ENCODE measurements at regions of chr6 and their contacts with region 1.

Region 1: DNA sequence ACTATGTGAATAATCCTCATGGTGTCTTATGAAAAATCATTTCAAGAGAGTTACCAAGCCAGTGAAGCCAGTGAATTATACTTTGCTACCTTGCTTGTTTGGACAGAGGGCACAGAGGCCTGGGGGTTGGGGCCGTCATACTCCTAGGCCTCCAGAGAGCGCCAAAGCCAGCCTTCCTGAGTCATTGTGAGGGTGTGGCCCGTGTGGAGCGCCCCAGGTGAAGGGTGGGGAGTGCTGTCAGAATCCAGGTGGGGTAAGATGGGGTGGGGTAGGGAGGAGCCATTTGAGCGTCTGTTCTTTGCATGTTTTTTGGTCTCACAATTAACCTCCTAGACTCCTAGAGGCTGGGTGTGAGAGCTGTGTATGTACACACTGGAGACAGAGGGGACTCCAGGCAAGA is 71.1 kb downstream of the PERP start:
- DNase-seq: peak in 1 of 4 experiments; percentile 8
- ATAC-seq: peak; percentile 75
- H3K4me3 ChIP-seq: no peak overlapping the region
- H3K27ac ChIP-seq: no peak overlapping the region
- H3K4me1 ChIP-seq: no peaks in the 10 kb centered on the region
- H3K27me3 ChIP-seq: peaks cover 9 to 23% of the 10 kb centered on the region in 2 experiments
- CTCF ChIP-seq: no peak
- EP300 ChIP-seq: no peak
- POLR2A ChIP-seq: no peak
- RAD21 ChIP-seq: no peak

Region 2: DNA sequence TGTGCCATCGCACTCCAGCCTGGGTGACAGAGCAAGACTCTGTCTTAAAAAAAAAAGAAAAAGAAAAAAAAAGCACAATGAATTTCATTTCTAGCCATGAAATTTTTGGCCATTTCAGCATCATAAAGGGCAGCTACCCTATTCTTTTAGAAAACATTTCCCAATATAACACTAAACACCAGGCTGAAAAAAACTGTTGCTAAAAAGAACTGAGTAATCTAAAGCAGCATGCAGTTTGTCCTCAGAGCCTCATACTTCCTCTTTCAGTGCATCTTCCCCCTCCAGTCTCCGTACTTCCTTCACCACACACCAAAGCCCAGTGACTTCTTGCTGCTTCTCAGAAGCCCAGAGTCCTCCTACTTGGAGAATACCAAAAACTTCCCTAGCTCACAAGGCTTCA is 811.3 kb before region 1 on chr6:
- CTCF ChIA-PET with region 1: no interaction called
- POLR2A ChIA-PET with region 1: no interaction called
- in situ Hi-C with region 1: no loop called
- intact Hi-C with region 1: no loop called
- DNase-seq: no peak
- ATAC-seq: peak; percentile 61
- H3K4me3 ChIP-seq: no peak overlapping the region
- H3K27ac ChIP-seq: peak overlapping the region; percentile 78; the same call in 1 of the 3 replicates
- H3K4me1 ChIP-seq: peaks cover 7 to 33% of the 10 kb centered on the region in 2 experiments
- H3K27me3 ChIP-seq: no peaks in the 10 kb centered on the region; a peak in 1 of 5 replicates
- CTCF ChIP-seq: no peak
- EP300 ChIP-seq: no peak
- POLR2A ChIP-seq: no peak
- RAD21 ChIP-seq: peak in 1 of 2 experiments; percentile 4; a peak in 2 of 4 replicates

Region 3: DNA sequence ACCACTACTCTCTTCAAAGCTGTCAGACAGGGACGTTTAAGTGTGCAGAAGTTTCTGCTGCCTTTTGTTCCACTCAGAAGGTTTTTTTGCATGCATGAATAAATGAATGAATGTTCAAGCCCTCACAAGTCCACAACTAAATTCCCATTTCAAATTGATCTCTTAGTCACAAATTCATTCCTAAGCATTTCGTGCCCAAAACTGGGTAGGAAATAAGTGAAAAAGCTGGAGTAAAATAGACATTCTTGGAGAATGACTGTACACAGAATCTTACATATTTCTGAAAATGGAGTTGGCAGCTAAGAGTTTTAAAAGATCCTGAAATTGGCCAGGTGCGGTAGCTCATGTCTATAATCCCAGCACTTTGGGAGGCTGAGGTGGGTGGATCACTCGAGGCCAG is 46.4 kb before region 1 on chr6:
- CTCF ChIA-PET with region 1: no interaction called
- POLR2A ChIA-PET with region 1: no interaction called
- in situ Hi-C with region 1: no loop called
- intact Hi-C with region 1: no loop called
- DNase-seq: no peak
- ATAC-seq: no peak
- H3K4me3 ChIP-seq: no peak overlapping the region
- H3K27ac ChIP-seq: no peak overlapping the region
- H3K4me1 ChIP-seq: no peaks in the 10 kb centered on the region
- H3K27me3 ChIP-seq: peaks cover 2 to 4% of the 10 kb centered on the region in 2 experiments; a peak in 2 of 5 replicates
- CTCF ChIP-seq: no peak
- EP300 ChIP-seq: no peak
- POLR2A ChIP-seq: no peak
- RAD21 ChIP-seq: no peak

Region 4: DNA sequence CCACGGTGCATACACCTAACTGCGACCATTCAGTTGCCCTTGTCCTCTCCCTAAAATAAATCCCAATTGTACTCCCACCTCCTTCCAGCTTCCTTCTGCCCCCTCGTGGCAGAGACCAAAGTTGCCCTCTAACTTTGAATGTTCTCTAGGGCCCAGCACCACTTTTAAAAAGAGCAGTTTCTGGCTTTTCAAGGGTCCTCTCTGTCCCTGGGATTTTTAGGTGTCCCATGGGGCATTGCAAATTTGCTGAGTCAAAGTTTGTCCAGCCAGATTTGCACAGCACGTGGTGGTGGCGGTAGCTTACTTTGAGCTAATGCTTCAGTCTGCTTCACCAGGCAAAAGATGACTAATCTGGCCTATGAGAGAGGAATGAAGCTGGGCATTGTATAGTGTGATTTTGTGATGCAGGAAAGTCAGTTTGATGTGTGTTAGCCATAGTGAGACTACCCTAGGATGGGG is 29.1 kb before region 1 on chr6:
- CTCF ChIA-PET with region 1: no interaction called
- POLR2A ChIA-PET with region 1: interaction called, 3 read pairs
- in situ Hi-C with region 1: no loop called
- intact Hi-C with region 1: loop called (anchors 1 kb)
- DNase-seq: peak; percentile 63 to 66 (median 65)
- ATAC-seq: peak; percentile 81
- H3K4me3 ChIP-seq: no peak overlapping the region
- H3K27ac ChIP-seq: no peak overlapping the region
- H3K4me1 ChIP-seq: peaks cover 5 to 6% of the 10 kb centered on the region in 2 experiments; a peak in 2 of 5 replicates
- H3K27me3 ChIP-seq: peaks cover 4 to 7% of the 10 kb centered on the region in 2 experiments; a peak in 2 of 5 replicates
- CTCF ChIP-seq: peak; percentile 76 to 82 (median 80)
- EP300 ChIP-seq: no peak
- POLR2A ChIP-seq: no peak
- RAD21 ChIP-seq: peak; percentile 54 to 76; a peak in 3 of 4 replicates

Measured in K562 (cell line).